Activated T-helper 1 cell treated with anti-CD3 and anti-CD28 coated beads, Interleukin-12 subunit alpha, Interleukin-12 subunit beta, Interleukin-2, Interleukin-4 antibody, amounts not matched to agents 30 ng/mL and 10 ng/mL and 1 ng/mL, durations not matched to agents 14 hours and 24 hours and 36 hours (primary cell): ENCODE measurements at regions of chr12 and their contacts with region 1.

Region 1: GRCh38 chr12:105279460-105280056 is 43.6 kb upstream of the APPL2 start:
- DNase-seq: peak; percentile 21
- H3K4me3 Mint-ChIP-seq: no peak overlapping the region
- H3K27ac Mint-ChIP-seq: no peak overlapping the region
- H3K4me1 Mint-ChIP-seq: no peaks in the 10 kb centered on the region
- H3K27me3 Mint-ChIP-seq: peaks cover 15% of the 10 kb centered on the region

Region 2: DNA sequence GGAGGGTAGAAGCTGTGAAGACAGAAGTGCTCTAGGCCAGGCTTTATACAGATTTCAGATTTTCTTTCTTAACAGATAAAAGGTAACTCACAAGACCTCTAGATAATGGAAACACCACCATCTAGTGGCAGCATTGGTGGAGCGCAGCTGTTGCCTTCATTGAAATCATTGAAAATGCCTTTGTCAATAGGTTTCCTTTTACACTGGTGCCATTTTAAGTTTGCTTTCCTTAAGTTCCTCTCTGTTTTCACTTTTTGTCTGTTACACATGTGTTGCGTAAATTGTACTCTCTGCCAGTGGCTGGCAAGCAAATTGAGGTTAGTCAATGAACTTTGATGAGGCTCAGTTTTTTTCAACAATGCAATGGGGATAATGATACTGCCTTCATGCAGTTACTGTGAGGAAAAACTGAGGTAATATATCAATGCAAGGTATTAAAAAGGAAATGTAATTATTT is 226.4 kb before region 1 on chr12:
- intact Hi-C with region 1: no loop called
- DNase-seq: peak; percentile 67
- H3K4me3 Mint-ChIP-seq: no peak overlapping the region
- H3K27ac Mint-ChIP-seq: peak overlapping the region; percentile 25
- H3K4me1 Mint-ChIP-seq: peaks cover 15% of the 10 kb centered on the region
- H3K27me3 Mint-ChIP-seq: no peaks in the 10 kb centered on the region

Region 3: GRCh38 chr12:105235732-105236476 is 43.7 kb before region 1 on chr12 and contains the start of gene APPL2:
- intact Hi-C with region 1: loop called (anchors 2 kb)
- DNase-seq: peak; percentile 71
- H3K4me3 Mint-ChIP-seq: peak within 1 kb of the TSS; percentile 91
- H3K27ac Mint-ChIP-seq: peak within 1 kb of the TSS; percentile 77
- H3K4me1 Mint-ChIP-seq: peaks cover 32% of the 10 kb centered on the region
- H3K27me3 Mint-ChIP-seq: peaks cover 3% of the 10 kb centered on the region
- total RNA-seq, gene APPL2: 22.9 and 27.8 TPM in 2 replicates